ENCODE measurements at regions of chr3 and their contacts with region 1.

Region 1: GRCh38 chr3:122564155-122564912 is at the starts of genes DTX3L and PARP9:
- DNase-seq: peak; percentile 77
- H3K4me3 ChIP-seq: peak within 1 kb of the TSS; percentile 60 to 96 (median 74)
- H3K27ac ChIP-seq: peak within 1 kb of the TSS; percentile 63
- H3K4me1 ChIP-seq: peaks cover 8% of the 10 kb centered on the region
- H3K27me3 ChIP-seq: no peaks in the 10 kb centered on the region
- CTCF ChIP-seq: no peak
- POLR2A ChIP-seq: peak; percentile 30
- total RNA-seq, gene DTX3L: 13.8 and 20.5 TPM in 2 replicates
- total RNA-seq, gene PARP9: 9.7 and 12.5 TPM in 2 replicates

Region 2: GRCh38 chr3:122458992-122459391 is 105.3 kb before region 1 on chr3:
- CTCF ChIA-PET with region 1: no interaction called
- POLR2A ChIA-PET with region 1: no interaction called
- dilution Hi-C with region 1: no loop called
- intact Hi-C with region 1: loop called (anchors 2 kb)
- DNase-seq: peak; percentile 51
- H3K4me3 ChIP-seq: no peak overlapping the region
- H3K27ac ChIP-seq: no peak overlapping the region
- H3K4me1 ChIP-seq: no peaks in the 10 kb centered on the region
- H3K27me3 ChIP-seq: no peaks in the 10 kb centered on the region
- CTCF ChIP-seq: peak in 1 of 2 donors; percentile 3
- POLR2A ChIP-seq: no peak

Region 3: GRCh38 chr3:122739172-122739571 is 174.8 kb after region 1 on chr3:
- CTCF ChIA-PET with region 1: no interaction called
- POLR2A ChIA-PET with region 1: no interaction called
- dilution Hi-C with region 1: no loop called
- intact Hi-C with region 1: no loop called
- DNase-seq: no peak
- H3K4me3 ChIP-seq: no peak overlapping the region
- H3K27ac ChIP-seq: no peak overlapping the region
- H3K4me1 ChIP-seq: no peaks in the 10 kb centered on the region
- H3K27me3 ChIP-seq: no peaks in the 10 kb centered on the region
- CTCF ChIP-seq: no peak
- POLR2A ChIP-seq: no peak

Region 4: DNA sequence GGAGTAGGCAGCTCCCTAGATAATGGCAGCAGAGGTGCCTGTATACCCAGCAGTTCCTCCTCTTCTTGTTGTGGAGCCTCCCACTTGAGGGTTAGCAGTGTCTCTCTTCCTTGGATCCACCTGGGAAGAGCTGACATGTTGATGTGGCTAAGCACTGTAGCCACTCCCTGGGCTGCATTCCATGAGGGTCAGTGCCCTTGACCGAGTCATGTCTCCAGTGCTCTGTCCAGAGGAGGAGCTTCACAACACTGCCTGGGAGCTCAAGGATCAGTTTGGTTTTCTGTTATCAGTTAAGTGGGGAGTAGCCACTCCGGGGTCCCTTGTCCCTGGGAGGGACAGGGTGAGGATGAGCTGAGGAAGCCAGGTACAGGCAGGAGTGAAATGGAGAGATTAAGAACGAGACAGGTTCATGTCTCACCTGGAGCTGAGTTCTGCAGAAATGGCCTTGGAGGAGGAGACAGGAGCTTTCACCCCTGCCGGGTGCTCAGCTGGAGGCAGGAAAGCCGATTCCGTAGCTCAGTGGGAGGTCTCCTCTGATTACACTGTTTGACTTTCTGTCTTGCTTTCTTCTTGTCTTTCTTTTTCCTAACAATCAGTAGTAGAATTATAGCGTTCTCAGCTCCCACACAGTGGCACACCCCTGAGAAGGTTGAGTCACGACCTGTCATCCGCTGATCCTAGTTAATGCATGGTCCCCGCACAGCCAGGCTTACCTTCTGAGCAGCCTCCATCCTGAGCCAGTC is 579.5 kb after region 1 on chr3:
- CTCF ChIA-PET with region 1: no interaction called
- POLR2A ChIA-PET with region 1: no interaction called
- dilution Hi-C with region 1: no loop called
- intact Hi-C with region 1: no loop called
- DNase-seq: no peak
- H3K4me3 ChIP-seq: no peak overlapping the region
- H3K27ac ChIP-seq: no peak overlapping the region
- H3K4me1 ChIP-seq: no peaks in the 10 kb centered on the region
- H3K27me3 ChIP-seq: no peaks in the 10 kb centered on the region
- CTCF ChIP-seq: no peak
- POLR2A ChIP-seq: no peak

Measured in endothelial cell of umbilical vein (primary cell).